ENCODE measurements at regions of chr2 and their contacts with region 1.

Region 1: GRCh38 chr2:74238879-74239278 is 40.5 kb downstream of the MTHFD2 start:
- DNase-seq: no peak

Region 2: DNA sequence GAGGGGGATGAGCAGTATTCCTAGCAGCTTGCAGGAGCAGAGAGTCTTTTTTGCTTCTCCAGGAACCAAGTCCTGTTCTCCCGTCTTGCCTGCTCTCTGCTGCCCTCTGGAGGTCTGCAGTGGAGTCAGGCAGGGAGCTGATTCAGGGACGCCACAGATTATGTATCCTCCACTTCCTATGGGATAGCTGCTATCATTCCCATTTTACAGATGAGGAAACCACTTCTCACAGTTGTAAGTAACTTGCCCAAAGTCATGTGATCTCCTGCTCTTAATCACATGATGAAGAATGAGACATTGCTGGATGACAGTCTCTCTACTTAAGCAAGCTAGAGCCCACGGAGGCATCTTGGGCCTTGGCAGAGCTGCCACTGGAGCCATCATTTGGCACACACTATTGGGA is 96.1 kb after region 1 on chr2:
- in situ Hi-C with region 1: loop called (anchors 25 kb)
- DNase-seq: peak; percentile 90